ENCODE measurements at regions of chr7 and their contacts with region 1.

Region 1: GRCh38 chr7:142632291-142633134 is 116.8 kb upstream of the PRSS1 start:
- DNase-seq: peak; percentile 18 to 65 (median 31)
- ATAC-seq: peak; percentile 42 to 73 (median 57)
- H3K4me3 ChIP-seq: no peak overlapping the region
- H3K27ac ChIP-seq: no peak overlapping the region
- H3K4me1 ChIP-seq: no peaks in the 10 kb centered on the region
- H3K27me3 ChIP-seq: peaks cover 0 to 40% (median 2%) of the 10 kb centered on the region in 9 donors
- CTCF ChIP-seq: peak; percentile 64 to 80 (median 74)
- POLR2A ChIP-seq: no peak

Region 2: GRCh38 chr7:142711746-142712619 is 79.5 kb after region 1 on chr7:
- intact Hi-C with region 1: loop called in 4 of 10 experiments (anchors 5 kb)
- DNase-seq: no peak
- ATAC-seq: peak in 1 of 4 donors; percentile 26
- H3K4me3 ChIP-seq: no peak overlapping the region
- H3K27ac ChIP-seq: peak overlapping the region in 1 of 12 donors; percentile 49
- H3K4me1 ChIP-seq: no peaks in the 10 kb centered on the region
- H3K27me3 ChIP-seq: peaks cover 0 to 4% (median 0%) of the 10 kb centered on the region in 9 donors
- CTCF ChIP-seq: peak; percentile 30 to 67 (median 57)
- POLR2A ChIP-seq: no peak

Region 3: GRCh38 chr7:142811154-142811737 is 178.7 kb after region 1 on chr7:
- intact Hi-C with region 1: loop called in 3 of 10 experiments (anchors 2 to 10 kb)
- DNase-seq: no peak
- ATAC-seq: no peak
- H3K4me3 ChIP-seq: no peak overlapping the region
- H3K27ac ChIP-seq: peak overlapping the region in 1 of 12 donors; percentile 83
- H3K4me1 ChIP-seq: peaks cover 0 to 16% (median 0%) of the 10 kb centered on the region in 12 donors
- H3K27me3 ChIP-seq: peaks cover 0 to 76% (median 26%) of the 10 kb centered on the region in 9 donors
- CTCF ChIP-seq: peak; percentile 34 to 60 (median 47)
- POLR2A ChIP-seq: no peak